ENCODE measurements at regions of chr2 and their contacts with region 1.

Region 1: GRCh38 chr2:33134086-33134771 is 187.5 kb downstream of the LTBP1 start:
- DNase-seq: peak; percentile 65 to 75
- ATAC-seq: peak; percentile 86 to 88 (median 88)
- H3K4me3 ChIP-seq: peak overlapping the region; percentile 65
- H3K27ac ChIP-seq: peak overlapping the region; percentile 83
- H3K4me1 ChIP-seq: peaks cover 6% of the 10 kb centered on the region
- H3K27me3 ChIP-seq: no peaks in the 10 kb centered on the region
- CTCF ChIP-seq: peak; percentile 22

Region 2: DNA sequence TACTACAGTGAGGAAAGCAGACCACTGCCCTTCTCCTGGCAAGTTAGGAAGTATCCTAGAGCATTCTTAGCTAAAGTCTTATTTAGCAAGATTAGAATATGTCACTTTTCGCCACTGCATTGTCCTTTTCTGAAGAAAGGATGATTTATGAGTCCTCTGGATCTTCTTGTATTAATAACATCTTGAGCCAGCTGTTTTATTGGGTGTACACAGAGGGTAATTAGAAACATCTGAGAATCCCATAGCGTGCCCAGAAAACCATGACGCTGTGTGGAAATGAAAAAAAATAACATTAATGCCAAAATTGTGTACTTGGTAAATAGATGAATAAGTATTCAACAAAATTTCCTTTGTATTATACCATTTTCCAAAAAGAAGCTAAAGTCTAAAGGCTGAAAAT is 11.2 kb after region 1 on chr2:
- intact Hi-C with region 1: no loop called
- DNase-seq: no peak
- ATAC-seq: peak in 1 of 4 donors; percentile 32
- H3K4me3 ChIP-seq: no peak overlapping the region
- H3K27ac ChIP-seq: peak overlapping the region; percentile 36
- H3K4me1 ChIP-seq: peaks cover 25% of the 10 kb centered on the region
- H3K27me3 ChIP-seq: no peaks in the 10 kb centered on the region
- CTCF ChIP-seq: no peak

Region 3: GRCh38 chr2:33275689-33276444 is 141.6 kb after region 1 on chr2:
- intact Hi-C with region 1: loop called in 1 of 2 experiments (anchors 5 kb)
- DNase-seq: peak; percentile 63 to 82
- ATAC-seq: peak; percentile 54 to 84 (median 70)
- H3K4me3 ChIP-seq: no peak overlapping the region
- H3K27ac ChIP-seq: no peak overlapping the region
- H3K4me1 ChIP-seq: peaks cover 6% of the 10 kb centered on the region
- H3K27me3 ChIP-seq: no peaks in the 10 kb centered on the region
- CTCF ChIP-seq: no peak

Region 4: DNA sequence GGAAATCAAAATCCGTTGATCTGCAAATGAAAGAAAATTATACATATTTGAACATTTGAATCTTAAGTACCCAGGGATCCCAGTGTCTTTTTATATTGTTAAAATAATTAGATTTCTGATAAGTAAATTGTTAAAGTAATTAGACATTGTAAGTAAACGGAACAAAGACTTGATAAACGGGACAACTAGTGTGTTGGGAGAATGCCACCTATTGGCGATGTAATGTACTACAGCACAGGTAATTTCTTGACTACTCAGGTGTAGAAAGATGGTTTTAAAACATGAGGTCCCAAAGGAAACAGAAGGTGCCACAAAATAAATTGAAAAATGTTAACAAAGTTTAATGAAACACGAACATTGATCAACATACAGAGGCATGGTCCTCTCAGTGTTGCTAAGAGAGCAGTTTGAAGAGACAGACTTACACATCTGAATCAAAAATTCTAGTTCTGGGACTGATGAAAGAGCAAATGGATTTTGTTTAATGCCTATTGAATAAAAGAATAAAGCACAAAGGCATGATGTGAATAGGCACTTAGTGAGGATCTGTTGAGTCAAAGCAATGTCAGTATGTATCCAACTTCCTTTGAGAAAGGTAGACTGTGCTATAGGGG is 238.8 kb after region 1 on chr2:
- intact Hi-C with region 1: loop called in 1 of 2 experiments (anchors 10 kb)
- DNase-seq: no peak
- ATAC-seq: peak in 3 of 4 donors; percentile 44 to 67 (median 49)
- H3K4me3 ChIP-seq: no peak overlapping the region
- H3K27ac ChIP-seq: no peak overlapping the region
- H3K4me1 ChIP-seq: no peaks in the 10 kb centered on the region
- H3K27me3 ChIP-seq: no peaks in the 10 kb centered on the region
- CTCF ChIP-seq: peak; percentile 74

Measured in psoas muscle (tissue), 8 donors.